ENCODE measurements at regions of chr1 and their contacts with region 1.

Region 1: DNA sequence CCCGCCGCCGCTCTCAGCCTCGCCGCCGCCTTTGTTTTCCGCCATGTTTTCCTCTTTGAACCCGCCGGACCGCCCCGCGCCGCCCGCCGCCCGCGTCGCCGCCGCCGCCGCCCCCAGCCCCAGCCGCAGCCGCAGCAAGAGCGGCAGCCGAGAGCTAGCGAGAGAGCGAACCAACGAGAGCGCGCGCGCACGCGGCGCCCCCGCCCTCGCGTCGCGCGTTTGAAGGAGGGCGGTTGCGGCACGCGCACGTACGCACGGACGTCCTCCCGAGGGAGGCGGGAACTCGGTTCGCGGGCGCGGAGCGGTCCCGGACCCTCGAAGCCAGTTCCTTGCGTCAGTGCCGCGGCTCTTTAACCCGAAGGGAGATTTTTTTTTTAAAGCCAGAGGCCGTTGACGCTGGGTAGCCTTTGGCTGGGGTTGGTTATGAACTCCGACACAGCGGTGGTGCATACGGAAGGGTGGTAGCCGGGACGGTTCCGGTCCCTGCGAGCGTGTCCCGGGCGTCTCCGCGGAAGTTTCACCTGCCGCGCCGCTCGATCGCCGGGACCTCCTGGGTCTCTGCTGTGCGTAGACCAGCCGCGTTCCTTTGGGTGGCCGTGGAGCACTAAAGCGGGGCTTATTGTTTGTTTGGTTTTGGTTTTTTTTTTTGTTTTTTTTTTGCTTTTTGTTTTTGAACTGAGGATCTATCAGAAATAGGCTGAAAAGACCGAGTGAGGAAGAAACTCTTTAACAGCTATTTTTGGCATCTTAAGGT is at the start of gene TRIM33:
- DNase-seq: peak; percentile 93
- ATAC-seq: peak; percentile 73
- H3K4me3 Mint-ChIP-seq: peak within 1 kb of the TSS; percentile 98
- H3K27ac Mint-ChIP-seq: peak within 1 kb of the TSS; percentile 99
- H3K4me1 Mint-ChIP-seq: peaks cover 48% of the 10 kb centered on the region
- H3K27me3 Mint-ChIP-seq: no peaks in the 10 kb centered on the region
- CTCF ChIP-seq: no peak
- total RNA-seq, gene TRIM33: 38.4 and 41.2 TPM in 2 replicates

Region 2: GRCh38 chr1:112955781-112956543 is 1555.2 kb before region 1 on chr1 and contains the start of gene SLC16A1:
- CTCF ChIA-PET with region 1: no interaction called
- POLR2A ChIA-PET with region 1: no interaction called
- intact Hi-C with region 1: loop called (anchors 10 kb)
- DNase-seq: peak; percentile 89
- ATAC-seq: peak; percentile 82
- H3K4me3 Mint-ChIP-seq: peak within 1 kb of the TSS; percentile 98
- H3K27ac Mint-ChIP-seq: peak within 1 kb of the TSS; percentile 98
- H3K4me1 Mint-ChIP-seq: peaks cover 49% of the 10 kb centered on the region
- H3K27me3 Mint-ChIP-seq: no peaks in the 10 kb centered on the region
- CTCF ChIP-seq: no peak
- total RNA-seq, gene SLC16A1: 17.8 and 17.9 TPM in 2 replicates

Region 3: GRCh38 chr1:114346480-114347029 is 164.7 kb before region 1 on chr1:
- CTCF ChIA-PET with region 1: no interaction called
- POLR2A ChIA-PET with region 1: no interaction called
- intact Hi-C with region 1: loop called (anchors 5 kb)
- DNase-seq: peak; percentile 95
- ATAC-seq: peak; percentile 100
- H3K4me3 Mint-ChIP-seq: peak overlapping the region; percentile 94
- H3K27ac Mint-ChIP-seq: peak overlapping the region; percentile 56
- H3K4me1 Mint-ChIP-seq: peaks cover 7% of the 10 kb centered on the region
- H3K27me3 Mint-ChIP-seq: peaks cover 7% of the 10 kb centered on the region
- CTCF ChIP-seq: peak; percentile 100

Region 4: DNA sequence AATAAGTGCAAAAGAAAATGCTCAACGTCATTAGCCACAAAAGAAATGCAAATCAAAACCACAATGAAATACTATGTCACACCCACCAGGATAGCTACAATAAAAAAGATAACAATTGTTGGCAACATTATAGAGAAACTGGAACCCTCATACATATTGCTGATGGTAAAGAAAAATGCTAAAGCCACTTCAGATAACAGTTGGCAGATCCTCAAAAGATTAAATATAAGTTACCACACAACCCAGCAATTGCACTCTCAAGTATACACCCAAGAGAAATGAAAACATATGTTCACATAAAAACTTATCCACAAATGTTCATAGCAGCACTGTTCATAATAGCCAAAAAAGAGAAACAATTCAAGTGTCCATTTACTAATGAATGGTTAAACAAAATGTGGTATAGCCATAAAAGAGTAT is 20.9 kb before region 1 on chr1:
- CTCF ChIA-PET with region 1: no interaction called
- POLR2A ChIA-PET with region 1: no interaction called
- intact Hi-C with region 1: loop called (anchors 2 kb)
- DNase-seq: no peak
- ATAC-seq: peak; percentile 40
- H3K4me3 Mint-ChIP-seq: no peak overlapping the region
- H3K27ac Mint-ChIP-seq: no peak overlapping the region
- H3K4me1 Mint-ChIP-seq: peaks cover 54% of the 10 kb centered on the region
- H3K27me3 Mint-ChIP-seq: no peaks in the 10 kb centered on the region
- CTCF ChIP-seq: no peak

Region 5: GRCh38 chr1:114581335-114582287 is 70.4 kb after region 1 on chr1 and contains the start of gene BCAS2:
- CTCF ChIA-PET with region 1: no interaction called
- POLR2A ChIA-PET with region 1: interaction called, 31 read pairs
- intact Hi-C with region 1: loop called (anchors 1 kb)
- DNase-seq: peak; percentile 81
- ATAC-seq: peak; percentile 97
- H3K4me3 Mint-ChIP-seq: peak within 1 kb of the TSS; percentile 99
- H3K27ac Mint-ChIP-seq: peak within 1 kb of the TSS; percentile 98
- H3K4me1 Mint-ChIP-seq: peaks cover 29% of the 10 kb centered on the region
- H3K27me3 Mint-ChIP-seq: peaks cover 2% of the 10 kb centered on the region
- CTCF ChIP-seq: no peak
- total RNA-seq, gene BCAS2: 33.1 and 36.3 TPM in 2 replicates

Region 6: GRCh38 chr1:114716304-114717170 is 205.3 kb after region 1 on chr1 and contains the start of gene NRAS:
- CTCF ChIA-PET with region 1: no interaction called
- POLR2A ChIA-PET with region 1: interaction called, 7 read pairs
- intact Hi-C with region 1: loop called (anchors 1 kb)
- DNase-seq: peak; percentile 97
- ATAC-seq: peak; percentile 94
- H3K4me3 Mint-ChIP-seq: peak within 1 kb of the TSS; percentile 99
- H3K27ac Mint-ChIP-seq: peak within 1 kb of the TSS; percentile 98
- H3K4me1 Mint-ChIP-seq: peaks cover 28% of the 10 kb centered on the region
- H3K27me3 Mint-ChIP-seq: no peaks in the 10 kb centered on the region
- CTCF ChIP-seq: no peak
- total RNA-seq, gene NRAS: 53.3 and 55.5 TPM in 2 replicates

Measured in activated B cell treated with CpG ODN at 0.5 μM for 24 hours (primary cell).